Calu3 (cell line): ENCODE measurements at regions of chr12 and their contacts with region 1.

Region 1: GRCh38 chr12:52879394-52880351 is 25.2 kb downstream of the KRT8 start:
- DNase-seq: peak; percentile 85
- H3K4me3 Mint-ChIP-seq: peak overlapping the region; percentile 48
- H3K27ac Mint-ChIP-seq: peak overlapping the region; percentile 18
- H3K4me1 Mint-ChIP-seq: peaks cover 35% of the 10 kb centered on the region
- H3K27me3 Mint-ChIP-seq: no peaks in the 10 kb centered on the region
- CTCF ChIP-seq: peak; percentile 79

Region 2: GRCh38 chr12:52147367-52147972 is 732.2 kb before region 1 on chr12:
- CTCF ChIA-PET with region 1: interaction called, 19 read pairs
- intact Hi-C with region 1: loop called (anchors 5 kb)
- DNase-seq: peak; percentile 96
- H3K4me3 Mint-ChIP-seq: peak overlapping the region; percentile 60
- H3K27ac Mint-ChIP-seq: peak overlapping the region; percentile 100
- H3K4me1 Mint-ChIP-seq: peaks cover 65% of the 10 kb centered on the region
- H3K27me3 Mint-ChIP-seq: no peaks in the 10 kb centered on the region
- CTCF ChIP-seq: no peak

Region 3: GRCh38 chr12:52390739-52391617 is 488.7 kb before region 1 on chr12:
- CTCF ChIA-PET with region 1: interaction called, 5 read pairs
- intact Hi-C with region 1: loop called (anchors 2 kb)
- DNase-seq: peak; percentile 41
- H3K4me3 Mint-ChIP-seq: no peak overlapping the region
- H3K27ac Mint-ChIP-seq: no peak overlapping the region
- H3K4me1 Mint-ChIP-seq: no peaks in the 10 kb centered on the region
- H3K27me3 Mint-ChIP-seq: no peaks in the 10 kb centered on the region
- CTCF ChIP-seq: peak; percentile 74

Region 4: GRCh38 chr12:52582971-52583456 is 296.7 kb before region 1 on chr12:
- CTCF ChIA-PET with region 1: interaction called, 11 read pairs
- intact Hi-C with region 1: no loop called
- DNase-seq: peak; percentile 58
- H3K4me3 Mint-ChIP-seq: no peak overlapping the region
- H3K27ac Mint-ChIP-seq: no peak overlapping the region
- H3K4me1 Mint-ChIP-seq: peaks cover 10% of the 10 kb centered on the region
- H3K27me3 Mint-ChIP-seq: peaks cover 48% of the 10 kb centered on the region
- CTCF ChIP-seq: peak; percentile 53

Region 5: DNA sequence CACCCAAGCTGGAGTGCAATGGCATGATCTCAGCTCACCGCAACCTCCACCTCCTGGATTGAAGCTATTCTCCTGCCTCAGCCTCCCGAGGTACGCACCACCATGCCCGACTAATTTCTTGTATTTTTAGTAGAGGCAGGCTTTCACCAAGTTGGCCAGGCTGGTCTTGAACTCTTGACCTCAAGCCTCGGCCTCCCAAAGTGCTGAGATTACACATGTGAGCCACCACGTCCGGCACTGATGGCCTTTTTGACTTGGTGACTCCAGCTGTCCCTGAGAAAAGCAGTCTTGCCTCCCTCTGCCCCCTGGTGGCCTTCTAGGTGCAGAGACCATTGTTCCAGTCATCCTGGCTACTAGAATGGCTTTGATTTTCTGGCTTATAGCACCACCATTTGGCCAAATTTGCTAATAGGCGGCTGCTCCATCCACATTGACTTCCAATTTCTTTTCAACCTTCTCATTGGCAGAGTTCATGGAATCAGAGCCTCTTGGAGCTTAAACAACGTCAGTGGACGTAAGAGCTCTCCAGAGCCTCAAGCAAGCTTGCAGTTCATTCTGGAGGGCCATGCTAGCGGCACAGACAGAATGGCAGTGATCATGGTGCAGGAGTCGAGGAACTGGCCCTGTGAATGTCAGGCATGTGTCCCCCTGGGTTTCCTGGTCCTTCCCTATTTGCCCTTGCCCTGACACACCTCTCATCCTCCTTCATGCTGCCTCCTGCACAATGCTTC is 101.2 kb after region 1 on chr12:
- CTCF ChIA-PET with region 1: interaction called, 85 read pairs
- intact Hi-C with region 1: loop called (anchors 1 kb)
- DNase-seq: peak; percentile 89
- H3K4me3 Mint-ChIP-seq: no peak overlapping the region
- H3K27ac Mint-ChIP-seq: peak overlapping the region; percentile 47
- H3K4me1 Mint-ChIP-seq: peaks cover 36% of the 10 kb centered on the region
- H3K27me3 Mint-ChIP-seq: no peaks in the 10 kb centered on the region
- CTCF ChIP-seq: peak; percentile 82